ENCODE measurements at regions of chr2 and their contacts with region 1.

Region 1: GRCh38 chr2:71675296-71675695 is 221.9 kb downstream of the DYSF start:
- DNase-seq: no peak

Region 2: GRCh38 chr2:71620116-71620515 is 55.2 kb before region 1 on chr2:
- intact Hi-C with region 1: loop called in 1 of 2 experiments (anchors 2 kb)
- DNase-seq: no peak

Region 3: GRCh38 chr2:71748227-71748626 is 72.9 kb after region 1 on chr2:
- intact Hi-C with region 1: no loop called
- DNase-seq: peak; percentile 89